ENCODE measurements at regions of chr9 and their contacts with region 1.

Region 1: GRCh38 chr9:37592108-37592951 is at the start of gene TOMM5:
- DNase-seq: peak; percentile 94 to 97 (median 96)
- H3K4me3 ChIP-seq: peak within 1 kb of the TSS; percentile 65 to 96 (median 91)
- H3K27ac ChIP-seq: peak within 1 kb of the TSS; percentile 71 to 89
- H3K4me1 ChIP-seq: peaks cover 0 to 33% (median 17%) of the 10 kb centered on the region in 4 experiments
- H3K27me3 ChIP-seq: peaks cover 0 to 11% (median 0%) of the 10 kb centered on the region in 5 experiments

Region 2: DNA sequence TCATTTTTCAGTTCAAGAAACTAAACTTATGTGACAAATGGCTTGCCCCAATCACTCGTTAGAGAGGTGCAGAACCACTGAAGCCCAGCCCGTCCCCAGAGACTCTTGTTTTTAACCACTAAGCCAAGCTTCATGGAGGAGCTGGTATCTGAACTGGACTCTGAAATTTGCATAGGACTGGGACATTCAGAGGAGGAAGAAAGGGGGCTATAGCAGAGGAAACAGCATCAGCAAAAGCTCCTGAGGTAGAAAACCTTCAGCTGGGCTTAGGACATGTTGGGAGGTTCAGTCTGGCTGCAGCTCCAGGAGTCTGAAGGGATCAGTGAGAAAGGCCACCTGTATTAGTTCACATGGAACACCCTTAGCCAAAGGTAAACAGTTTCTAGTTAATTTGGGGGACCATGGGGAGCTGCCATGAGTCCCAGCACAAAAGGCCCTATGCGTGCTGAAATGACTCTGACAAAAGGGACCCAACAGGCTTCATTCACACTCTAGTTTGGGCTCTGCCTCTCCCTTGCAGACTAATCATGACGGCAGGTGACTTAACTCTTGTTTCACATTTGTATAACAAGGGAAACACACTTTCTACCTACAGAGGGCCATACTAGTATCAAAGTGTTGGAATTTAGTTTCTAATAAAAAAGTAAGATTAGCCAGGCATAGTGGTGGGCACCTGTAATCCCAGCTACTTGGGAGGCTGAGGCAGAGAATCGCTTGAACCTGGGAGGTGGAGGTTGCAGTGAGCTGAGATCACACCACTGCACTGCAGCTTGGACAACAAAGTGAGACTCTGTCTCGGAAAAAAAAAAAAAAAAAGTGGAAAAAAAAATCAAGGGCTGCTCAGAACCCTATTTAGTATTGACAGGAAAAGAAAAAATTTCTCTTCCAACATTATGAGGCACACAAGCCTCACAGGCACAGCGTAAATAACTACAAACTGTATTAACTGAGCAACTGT is 26.4 kb before region 1 on chr9:
- CTCF ChIA-PET with region 1: no interaction called
- POLR2A ChIA-PET with region 1: no interaction called
- DNase-seq: no peak
- H3K4me3 ChIP-seq: no peak overlapping the region
- H3K27ac ChIP-seq: no peak overlapping the region
- H3K4me1 ChIP-seq: no peaks in the 10 kb centered on the region
- H3K27me3 ChIP-seq: no peaks in the 10 kb centered on the region

Region 3: DNA sequence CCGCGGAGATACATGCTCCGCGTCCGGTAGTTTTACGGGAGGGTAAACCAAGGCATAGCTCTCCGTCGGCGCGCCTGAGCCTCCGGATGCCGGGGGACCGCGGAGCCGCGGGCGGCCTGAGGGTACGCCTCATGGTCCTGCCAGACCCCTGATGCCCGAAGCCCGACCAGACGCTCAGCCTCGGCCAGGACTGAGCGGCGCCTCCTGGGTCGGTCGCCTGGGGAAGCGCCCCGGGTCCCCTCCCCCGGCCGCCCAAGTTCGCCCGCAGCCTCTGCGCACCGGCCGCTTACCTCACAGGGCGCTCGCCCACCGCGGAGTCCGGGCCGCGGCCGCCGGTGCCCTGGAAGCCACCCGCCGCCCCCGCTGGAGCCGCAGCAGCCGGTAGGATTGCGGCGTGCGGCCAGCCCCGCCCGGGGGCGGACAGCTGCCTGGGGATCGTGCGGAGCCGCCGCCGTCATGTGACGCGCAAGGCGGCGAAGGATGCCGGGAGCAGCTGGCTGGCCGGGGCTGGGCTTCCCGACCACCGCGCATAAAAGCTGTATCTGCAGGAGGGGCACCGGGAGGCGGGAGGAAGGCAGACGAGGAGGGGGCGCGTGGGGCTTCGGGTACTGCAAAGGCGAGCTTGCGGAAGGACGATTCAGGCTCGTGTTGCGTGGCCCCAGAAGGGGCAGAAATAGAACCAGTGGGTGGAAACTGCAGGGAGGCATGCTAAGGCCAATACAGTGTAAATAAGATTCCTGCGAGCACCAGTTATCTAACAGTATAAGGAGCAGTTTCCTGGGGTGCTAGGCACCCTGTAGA is 16.2 kb before region 1 on chr9 and contains the start of gene FBXO10:
- CTCF ChIA-PET with region 1: interaction called, 85 read pairs
- POLR2A ChIA-PET with region 1: interaction called, 8 read pairs
- DNase-seq: peak; percentile 48 to 85 (median 79)
- H3K4me3 ChIP-seq: peak within 1 kb of the TSS; percentile 28 to 82 (median 70)
- H3K27ac ChIP-seq: no peak within 1 kb of the TSS
- H3K4me1 ChIP-seq: peaks cover 5 to 18% (median 11%) of the 10 kb centered on the region in 4 experiments
- H3K27me3 ChIP-seq: peaks cover 0 to 9% (median 0%) of the 10 kb centered on the region in 5 experiments

Region 4: DNA sequence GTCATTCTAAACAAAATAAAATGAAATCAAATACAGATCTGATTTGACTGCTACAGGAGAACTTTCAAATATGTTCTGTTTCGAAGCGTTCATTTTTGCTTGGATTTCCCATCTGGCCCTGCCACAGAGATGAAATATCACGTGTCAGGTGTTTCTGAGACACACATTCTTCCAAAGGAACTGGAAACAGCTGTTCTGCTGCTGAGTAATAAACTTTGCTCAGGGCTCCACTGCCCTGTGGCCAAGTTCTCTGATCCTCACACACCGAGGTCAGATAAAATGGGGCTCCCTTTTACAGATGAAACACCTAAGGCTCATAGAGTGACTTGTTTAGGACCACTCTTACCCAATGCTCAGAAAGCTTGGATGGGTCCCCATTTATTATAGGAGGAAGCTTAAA is 100.9 kb after region 1 on chr9:
- CTCF ChIA-PET with region 1: no interaction called
- POLR2A ChIA-PET with region 1: no interaction called
- DNase-seq: peak; percentile 20 to 82 (median 70)
- H3K4me3 ChIP-seq: peak overlapping the region in 1 of 7 experiments; percentile 17
- H3K27ac ChIP-seq: no peak overlapping the region
- H3K4me1 ChIP-seq: peaks cover 3 to 29% (median 16%) of the 10 kb centered on the region in 4 experiments
- H3K27me3 ChIP-seq: no peaks in the 10 kb centered on the region

Measured in common myeloid progenitor, CD34-positive (primary cell).